GM13977 (cell line): ENCODE measurements at regions of chr1 and their contacts with region 1.

Region 1: GRCh38 chr1:182595641-182596240 is 6.7 kb upstream of the RNASEL start:
- DNase-seq: peak; percentile 60
- CTCF ChIP-seq: peak; percentile 94

Region 2: GRCh38 chr1:182397771-182398393 is 197.9 kb before region 1 on chr1:
- in situ Hi-C with region 1: no loop called
- DNase-seq: no peak
- CTCF ChIP-seq: no peak

Region 3: DNA sequence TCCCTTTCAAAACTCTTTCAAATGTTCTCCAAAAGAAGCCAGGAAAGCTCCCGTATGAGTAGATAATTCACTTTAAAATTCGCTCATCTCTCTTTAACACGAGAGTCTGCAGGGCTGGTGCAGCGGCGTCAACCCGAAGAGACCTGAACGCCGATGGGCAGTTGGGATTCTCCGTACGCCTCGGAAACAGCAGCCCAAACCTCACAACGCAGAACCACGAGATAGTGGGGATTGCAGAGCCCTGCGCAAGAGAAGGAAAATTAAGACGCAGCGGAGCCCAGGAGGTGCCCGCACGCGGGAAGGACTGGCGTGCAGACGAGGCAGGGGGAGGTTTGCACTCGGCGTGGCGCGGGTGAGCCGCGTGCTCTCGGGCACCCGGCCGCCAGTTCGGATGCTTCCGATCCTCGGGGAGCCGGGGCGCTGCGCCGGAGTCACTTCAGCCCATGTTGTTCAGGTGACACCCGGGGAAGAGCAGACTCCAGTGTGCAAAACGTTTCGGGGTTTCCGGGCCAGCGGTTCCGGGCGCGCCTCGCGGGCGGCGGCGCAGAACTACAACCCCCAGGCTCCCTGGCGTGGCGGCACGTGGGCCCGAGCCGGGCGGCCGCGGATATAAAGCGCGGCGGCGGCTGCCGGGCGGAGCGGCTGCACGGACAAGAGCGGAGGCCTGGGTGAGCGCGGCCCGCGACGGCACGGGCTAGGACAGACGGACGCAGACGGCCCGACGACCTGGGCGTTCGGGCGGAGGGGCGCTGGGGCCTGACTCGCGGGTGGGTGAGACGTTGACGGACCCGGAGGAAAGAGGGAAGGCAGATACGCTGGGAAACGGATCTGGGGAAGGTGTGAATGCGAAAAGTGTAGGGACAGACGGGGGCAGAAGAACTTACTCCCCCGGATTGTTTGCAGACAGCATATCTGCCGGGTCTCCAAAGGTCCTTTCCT is 193.7 kb after region 1 on chr1 and contains the start of gene NPL:
- in situ Hi-C with region 1: loop called (anchors 5 kb)
- DNase-seq: peak; percentile 90
- CTCF ChIP-seq: no peak